PC-9 (cell line): ENCODE measurements at regions of chr2 and their contacts with region 1.

Region 1: DNA sequence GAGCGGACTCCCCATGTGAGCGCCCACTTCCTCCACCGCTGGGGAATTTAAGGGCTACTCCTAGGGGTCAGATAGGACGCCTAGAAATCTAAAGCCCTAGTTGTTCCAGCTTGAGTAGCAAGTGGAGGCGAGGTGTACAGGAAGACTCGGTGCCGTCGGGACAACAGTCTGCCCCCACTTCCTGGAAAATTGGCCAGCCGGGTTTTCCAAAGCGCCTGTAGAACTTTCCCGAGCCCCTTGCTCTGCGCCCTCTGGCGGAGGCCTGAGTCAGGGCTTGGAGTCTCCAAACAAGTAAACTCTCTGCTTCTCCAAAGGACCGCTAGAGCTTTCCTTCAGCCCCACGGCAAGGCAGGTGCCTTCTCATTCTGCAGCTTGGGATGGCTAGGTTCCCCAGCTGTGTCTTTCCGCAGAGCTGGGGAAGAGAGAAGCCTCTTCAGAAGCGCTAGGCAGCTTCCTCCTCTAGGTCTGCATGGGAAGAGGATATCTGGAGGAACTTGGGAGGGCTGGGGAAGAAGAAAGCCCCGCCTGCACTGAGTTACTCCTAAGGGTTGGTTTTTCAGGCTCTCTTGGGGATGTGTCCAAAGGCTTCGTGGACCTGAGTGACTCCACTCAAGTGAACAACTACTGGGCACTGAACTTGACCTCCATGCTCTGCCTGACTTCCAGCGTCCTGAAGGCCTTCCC is 688 bp downstream of the SPR start:
- DNase-seq: peak; percentile 80 to 83
- H3K4me3 ChIP-seq: peak overlapping the region; percentile 85
- H3K27ac ChIP-seq: no peak overlapping the region
- H3K4me1 ChIP-seq: peaks cover 22% of the 10 kb centered on the region
- H3K27me3 ChIP-seq: no peaks in the 10 kb centered on the region
- CTCF ChIP-seq: peak; percentile 92

Region 2: GRCh38 chr2:71545572-71546274 is 1342.2 kb before region 1 on chr2:
- CTCF ChIA-PET with region 1: no interaction called
- POLR2A ChIA-PET with region 1: no interaction called
- intact Hi-C with region 1: loop called (anchors 1 kb)
- DNase-seq: peak; percentile 31 to 48
- H3K4me3 ChIP-seq: no peak overlapping the region
- H3K27ac ChIP-seq: no peak overlapping the region
- H3K4me1 ChIP-seq: no peaks in the 10 kb centered on the region
- H3K27me3 ChIP-seq: no peaks in the 10 kb centered on the region
- CTCF ChIP-seq: peak; percentile 87

Region 3: DNA sequence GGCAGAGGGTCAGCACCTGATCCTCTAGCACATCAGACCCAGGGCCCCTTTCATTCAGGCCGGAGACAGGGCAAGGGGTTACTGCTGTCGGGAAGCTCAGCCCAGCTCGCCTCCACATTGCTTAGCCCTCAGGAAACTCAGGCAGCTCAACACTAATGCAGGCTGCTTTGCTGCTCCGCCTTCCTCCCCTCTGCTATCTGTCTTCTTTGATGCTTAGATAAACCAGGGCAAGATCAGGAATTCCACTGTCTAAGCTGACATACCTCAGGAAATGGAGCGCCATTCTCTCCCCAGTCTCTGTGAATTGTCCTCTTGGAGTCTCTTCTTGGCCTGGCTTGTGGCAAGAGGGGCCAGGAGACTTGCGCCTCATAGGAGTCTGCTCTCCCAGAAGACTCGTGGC is 36.6 kb before region 1 on chr2:
- CTCF ChIA-PET with region 1: no interaction called
- POLR2A ChIA-PET with region 1: no interaction called
- intact Hi-C with region 1: no loop called
- DNase-seq: no peak
- H3K4me3 ChIP-seq: no peak overlapping the region
- H3K27ac ChIP-seq: no peak overlapping the region
- H3K4me1 ChIP-seq: no peaks in the 10 kb centered on the region
- H3K27me3 ChIP-seq: peaks cover 16% of the 10 kb centered on the region; the same call in 1 of the 2 replicates
- CTCF ChIP-seq: no peak

Region 4: DNA sequence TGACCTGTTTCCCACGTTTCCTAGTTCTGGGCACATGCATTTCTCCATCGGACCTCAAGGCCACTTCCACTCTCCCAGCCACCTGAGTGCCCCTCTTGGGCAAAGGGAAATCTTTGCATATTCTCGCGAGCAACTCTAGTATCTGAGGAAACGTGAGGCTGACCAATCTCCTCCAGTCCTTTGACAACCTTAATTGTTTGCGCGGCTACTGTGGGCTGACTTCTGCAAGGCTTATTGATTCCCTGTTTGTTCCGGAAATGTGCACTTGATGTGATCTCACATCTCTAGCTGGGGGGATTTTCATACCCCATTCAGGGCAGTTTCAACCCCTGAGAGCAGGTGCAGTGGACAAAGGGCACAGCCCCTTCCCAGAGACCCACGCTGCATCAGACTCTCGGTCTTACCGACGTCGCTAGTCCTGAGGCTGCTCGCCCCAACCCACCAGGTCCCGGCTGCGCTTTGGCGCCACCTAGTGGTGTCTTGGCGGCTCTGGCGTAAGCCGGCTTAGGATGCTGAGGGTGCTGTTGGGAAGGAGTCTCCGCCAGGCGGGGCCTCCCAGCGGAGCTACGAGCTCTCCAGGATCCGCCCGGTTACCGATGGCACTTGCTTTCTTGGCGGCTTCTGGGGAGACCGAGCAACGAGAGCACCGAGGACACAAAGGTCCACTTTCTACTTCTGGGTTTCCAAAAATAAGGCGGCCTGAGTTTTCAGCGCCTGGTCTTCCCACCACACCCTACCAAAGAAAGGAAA is 25.5 kb before region 1 on chr2:
- CTCF ChIA-PET with region 1: interaction called, 10 read pairs
- POLR2A ChIA-PET with region 1: no interaction called
- intact Hi-C with region 1: no loop called
- DNase-seq: peak; percentile 78 to 90
- H3K4me3 ChIP-seq: peak overlapping the region; percentile 46; the same call in 1 of the 2 replicates
- H3K27ac ChIP-seq: no peak overlapping the region
- H3K4me1 ChIP-seq: no peaks in the 10 kb centered on the region; the same call in 1 of the 2 replicates
- H3K27me3 ChIP-seq: no peaks in the 10 kb centered on the region
- CTCF ChIP-seq: peak; percentile 97

Region 5: GRCh38 chr2:72915907-72916742 is 28.2 kb after region 1 on chr2:
- CTCF ChIA-PET with region 1: no interaction called
- POLR2A ChIA-PET with region 1: no interaction called
- intact Hi-C with region 1: no loop called
- DNase-seq: peak; percentile 58 to 63
- H3K4me3 ChIP-seq: peak overlapping the region; percentile 74
- H3K27ac ChIP-seq: no peak overlapping the region
- H3K4me1 ChIP-seq: peaks cover 14% of the 10 kb centered on the region
- H3K27me3 ChIP-seq: peaks cover 81% of the 10 kb centered on the region
- CTCF ChIP-seq: no peak

Region 6: GRCh38 chr2:72973566-72974435 is 85.9 kb after region 1 on chr2:
- CTCF ChIA-PET with region 1: interaction called, 26 read pairs
- POLR2A ChIA-PET with region 1: interaction called, 16 read pairs
- intact Hi-C with region 1: loop called (anchors 1 kb)
- DNase-seq: peak; percentile 41
- H3K4me3 ChIP-seq: no peak overlapping the region
- H3K27ac ChIP-seq: no peak overlapping the region
- H3K4me1 ChIP-seq: no peaks in the 10 kb centered on the region
- H3K27me3 ChIP-seq: no peaks in the 10 kb centered on the region
- CTCF ChIP-seq: peak; percentile 93

Region 7: GRCh38 chr2:73163483-73164367 is 275.8 kb after region 1 on chr2:
- CTCF ChIA-PET with region 1: no interaction called
- POLR2A ChIA-PET with region 1: no interaction called
- intact Hi-C with region 1: loop called (anchors 1 kb)
- DNase-seq: peak; percentile 48 to 68
- H3K4me3 ChIP-seq: no peak overlapping the region
- H3K27ac ChIP-seq: no peak overlapping the region
- H3K4me1 ChIP-seq: no peaks in the 10 kb centered on the region
- H3K27me3 ChIP-seq: peaks cover 13% of the 10 kb centered on the region; the same call in 1 of the 2 replicates
- CTCF ChIP-seq: peak; percentile 93

Region 8: GRCh38 chr2:73187549-73187948 is 299.7 kb after region 1 on chr2:
- CTCF ChIA-PET with region 1: no interaction called
- POLR2A ChIA-PET with region 1: no interaction called
- intact Hi-C with region 1: no loop called
- DNase-seq: no peak
- H3K4me3 ChIP-seq: no peak overlapping the region
- H3K27ac ChIP-seq: no peak overlapping the region
- H3K4me1 ChIP-seq: no peaks in the 10 kb centered on the region
- H3K27me3 ChIP-seq: peaks cover 42% of the 10 kb centered on the region
- CTCF ChIP-seq: no peak

Region 9: DNA sequence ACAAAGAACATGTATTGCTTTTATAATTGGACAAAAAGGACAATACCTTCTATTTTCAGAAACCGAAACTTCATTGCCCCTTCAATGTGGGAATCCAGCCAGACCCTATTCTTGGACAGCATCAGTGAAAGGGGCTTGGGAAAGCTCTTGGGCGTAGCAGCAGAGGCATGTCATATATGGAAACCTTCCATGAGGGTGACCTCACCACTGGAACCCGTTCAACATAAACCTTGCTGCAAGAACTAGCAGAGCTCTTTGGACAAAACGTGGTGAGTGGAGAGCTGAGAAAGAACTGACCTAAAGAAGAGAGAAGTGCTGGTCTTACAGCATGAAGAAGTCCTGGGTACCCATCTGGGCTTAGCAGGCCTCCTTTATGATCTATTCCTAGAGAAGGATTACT is 982.2 kb after region 1 on chr2:
- CTCF ChIA-PET with region 1: no interaction called
- POLR2A ChIA-PET with region 1: no interaction called
- intact Hi-C with region 1: no loop called
- DNase-seq: no peak
- H3K4me3 ChIP-seq: no peak overlapping the region
- H3K27ac ChIP-seq: no peak overlapping the region
- H3K4me1 ChIP-seq: peaks cover 5% of the 10 kb centered on the region; the same call in 1 of the 2 replicates
- H3K27me3 ChIP-seq: no peaks in the 10 kb centered on the region
- CTCF ChIP-seq: no peak